Left cardiac atrium (tissue), 4 donors: ENCODE measurements at regions of chr3 and their contacts with region 1.

Region 1: GRCh38 chr3:98329392-98330124 is 24.1 kb upstream of the OR5K4 start:
- DNase-seq: peak; percentile 31
- ATAC-seq: peak; percentile 50 to 51

Region 2: DNA sequence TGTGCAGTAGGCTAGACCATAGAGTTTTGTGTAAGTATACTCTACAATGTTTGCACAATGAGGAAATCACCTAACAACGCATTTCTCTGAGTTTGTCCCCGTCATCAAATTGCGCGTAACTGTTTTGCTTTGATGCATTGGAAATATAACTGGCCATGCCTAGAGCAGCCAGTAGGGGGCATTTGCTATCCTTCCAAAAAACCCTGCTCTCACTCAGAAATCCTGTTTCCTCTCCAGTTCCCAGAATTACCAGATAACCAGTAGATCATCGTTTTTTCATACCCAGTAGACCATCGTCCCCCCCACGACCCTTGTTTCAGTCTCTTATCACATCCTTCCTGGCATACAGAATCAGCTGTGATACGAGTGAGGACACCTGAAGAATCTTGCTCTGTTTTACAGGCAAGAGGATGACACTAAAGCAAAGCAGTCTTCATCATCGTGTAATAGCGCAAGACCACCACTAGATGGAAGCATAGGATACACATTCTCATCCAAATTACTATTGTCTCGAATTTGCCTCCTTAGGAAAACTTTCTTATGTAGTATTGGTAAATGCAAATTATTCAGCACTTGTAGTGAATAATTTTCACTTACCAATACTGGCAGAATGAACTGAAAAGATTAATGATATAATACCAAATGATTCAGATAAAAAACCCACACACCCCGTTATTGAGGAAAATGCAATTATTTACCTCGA is 290.1 kb before region 1 on chr3:
- intact Hi-C with region 1: loop called (anchors 2 to 5 kb)
- DNase-seq: peak; percentile 57
- ATAC-seq: peak; percentile 87 to 89

Region 3: GRCh38 chr3:98172621-98173020 is 156.9 kb before region 1 on chr3:
- intact Hi-C with region 1: no loop called
- DNase-seq: no peak
- ATAC-seq: no peak

Region 4: GRCh38 chr3:98705706-98706105 is 376.1 kb after region 1 on chr3:
- intact Hi-C with region 1: no loop called
- DNase-seq: no peak
- ATAC-seq: peak in 1 of 2 donors; percentile 70